ENCODE measurements at regions of chr5 and their contacts with region 1.

Region 1: DNA sequence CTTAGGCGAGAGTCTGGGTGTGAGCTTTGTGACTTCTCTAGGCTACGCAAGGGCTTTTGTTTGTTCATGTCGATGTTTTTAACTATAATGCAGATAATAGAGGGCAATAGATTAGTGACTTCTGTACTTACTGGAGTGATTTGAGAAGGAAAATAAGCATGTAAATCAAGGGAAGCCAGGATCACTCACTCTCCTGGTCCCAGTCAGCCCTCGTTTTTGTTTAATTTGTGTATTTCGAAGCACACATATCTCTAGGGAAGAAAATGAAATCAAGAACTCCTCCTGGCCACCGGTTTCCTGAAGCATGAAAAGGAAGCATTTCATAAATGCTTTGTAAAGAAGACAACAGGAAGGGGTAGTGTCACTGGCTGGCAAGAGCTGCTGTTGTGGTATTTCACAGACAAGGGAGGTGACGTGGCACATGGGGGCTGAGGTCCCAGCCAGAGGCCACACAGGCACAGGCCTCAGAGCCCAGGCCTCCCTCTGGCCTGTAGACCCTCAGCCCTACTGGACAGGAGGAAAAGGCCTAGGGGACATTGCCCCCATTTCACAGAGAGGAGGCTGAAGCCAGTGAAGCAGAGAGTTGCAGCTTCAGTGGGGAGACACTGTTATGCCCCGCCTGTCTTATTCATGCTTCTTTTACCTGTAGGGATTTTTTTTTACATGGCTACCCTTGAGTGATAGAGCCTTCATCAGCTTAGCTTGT is 34.1 kb downstream of the IRF1 start:
- DNase-seq: peak; percentile 82
- H3K4me3 Mint-ChIP-seq: peak overlapping the region; percentile 51
- H3K27ac Mint-ChIP-seq: peak overlapping the region; percentile 99
- H3K4me1 Mint-ChIP-seq: peaks cover 92% of the 10 kb centered on the region
- H3K27me3 Mint-ChIP-seq: no peaks in the 10 kb centered on the region

Region 2: GRCh38 chr5:132342291-132343180 is 113.9 kb before region 1 on chr5:
- CTCF ChIA-PET with region 1: no interaction called
- POLR2A ChIA-PET with region 1: no interaction called
- DNase-seq: no peak
- H3K4me3 Mint-ChIP-seq: no peak overlapping the region
- H3K27ac Mint-ChIP-seq: no peak overlapping the region
- H3K4me1 Mint-ChIP-seq: no peaks in the 10 kb centered on the region
- H3K27me3 Mint-ChIP-seq: no peaks in the 10 kb centered on the region

Region 3: DNA sequence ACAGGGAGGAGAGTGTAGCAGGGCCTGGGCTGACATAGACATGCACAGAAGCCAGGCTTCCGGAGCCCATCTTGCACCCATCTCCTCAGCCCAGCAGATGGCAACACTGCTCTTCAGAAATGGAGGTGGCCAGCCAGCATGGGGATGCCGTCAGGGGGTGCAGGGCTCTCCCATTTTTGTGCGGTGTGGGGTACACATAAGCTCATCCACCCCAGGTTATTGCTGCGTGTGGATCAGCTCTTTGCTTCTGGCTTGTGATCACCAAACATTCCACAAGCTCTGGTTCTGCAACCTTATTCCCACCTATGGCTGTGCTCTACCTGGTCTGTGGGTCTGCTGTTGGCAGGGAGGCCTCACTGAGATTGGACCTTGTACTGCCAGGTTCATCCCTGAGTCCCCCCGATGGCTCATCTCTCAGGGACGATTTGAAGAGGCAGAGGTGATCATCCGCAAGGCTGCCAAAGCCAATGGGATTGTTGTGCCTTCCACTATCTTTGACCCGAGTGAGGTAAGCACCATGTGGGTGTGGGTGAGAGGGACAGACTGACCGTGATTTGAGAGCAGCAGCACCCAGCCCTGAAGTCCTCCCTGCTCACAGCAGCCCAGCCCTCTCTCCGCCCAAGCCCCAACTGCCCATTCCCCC is 69.7 kb before region 1 on chr5:
- CTCF ChIA-PET with region 1: interaction called, 11 read pairs
- POLR2A ChIA-PET with region 1: no interaction called
- DNase-seq: peak; percentile 84
- H3K4me3 Mint-ChIP-seq: no peak overlapping the region
- H3K27ac Mint-ChIP-seq: peak overlapping the region; percentile 86
- H3K4me1 Mint-ChIP-seq: peaks cover 57% of the 10 kb centered on the region
- H3K27me3 Mint-ChIP-seq: no peaks in the 10 kb centered on the region

Region 4: GRCh38 chr5:132437604-132438266 is 18.7 kb before region 1 on chr5:
- CTCF ChIA-PET with region 1: interaction called, 64 read pairs
- POLR2A ChIA-PET with region 1: interaction called, 4 read pairs
- DNase-seq: peak; percentile 72
- H3K4me3 Mint-ChIP-seq: peak overlapping the region; percentile 53
- H3K27ac Mint-ChIP-seq: peak overlapping the region; percentile 89
- H3K4me1 Mint-ChIP-seq: peaks cover 87% of the 10 kb centered on the region
- H3K27me3 Mint-ChIP-seq: no peaks in the 10 kb centered on the region

Region 5: DNA sequence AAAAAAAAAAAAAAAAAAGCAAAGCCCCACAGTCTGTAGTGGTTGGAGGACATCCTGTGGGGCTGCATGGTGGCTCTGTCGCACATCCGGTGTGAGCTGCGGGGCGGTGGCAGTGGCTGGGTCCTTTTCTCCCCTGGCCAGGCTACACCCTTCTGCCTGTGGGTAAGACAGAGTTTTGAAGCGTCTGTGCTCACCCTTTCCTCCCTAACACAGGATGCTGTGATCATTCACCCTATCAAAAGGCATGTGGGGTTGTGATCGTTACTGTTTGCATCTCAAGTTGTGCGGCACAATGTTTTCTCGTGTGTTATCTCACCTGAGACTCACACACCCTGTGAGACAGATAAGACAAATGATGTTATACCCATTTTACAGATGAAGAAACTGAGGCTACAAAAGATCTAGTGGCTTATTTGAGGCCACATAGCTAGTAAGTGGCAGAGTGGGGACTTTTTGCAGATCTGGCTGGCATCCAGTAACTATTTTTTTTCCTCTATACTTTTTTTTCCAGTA is 16.6 kb after region 1 on chr5:
- CTCF ChIA-PET with region 1: interaction called, 31 read pairs
- POLR2A ChIA-PET with region 1: no interaction called
- DNase-seq: peak; percentile 92
- H3K4me3 Mint-ChIP-seq: peak overlapping the region; percentile 31
- H3K27ac Mint-ChIP-seq: peak overlapping the region; percentile 92
- H3K4me1 Mint-ChIP-seq: peaks cover 87% of the 10 kb centered on the region
- H3K27me3 Mint-ChIP-seq: no peaks in the 10 kb centered on the region

Region 6: GRCh38 chr5:132490486-132491367 is 34.3 kb after region 1 on chr5 and contains the start of gene IRF1:
- CTCF ChIA-PET with region 1: interaction called, 5 read pairs
- POLR2A ChIA-PET with region 1: interaction called, 12 read pairs
- DNase-seq: peak; percentile 98
- H3K4me3 Mint-ChIP-seq: peak within 1 kb of the TSS; percentile 99
- H3K27ac Mint-ChIP-seq: peak within 1 kb of the TSS; percentile 96
- H3K4me1 Mint-ChIP-seq: peaks cover 70% of the 10 kb centered on the region
- H3K27me3 Mint-ChIP-seq: no peaks in the 10 kb centered on the region
- total RNA-seq, gene IRF1: 289 to 302 TPM

Measured in activated CD4-positive, alpha-beta T cell treated with anti-CD3 and anti-CD28 coated beads, Interleukin-2, amount 10 ng/mL, durations not matched to agents 7 days and 5 days (primary cell).